ENCODE measurements at regions of chr17 and their contacts with region 1.

Region 1: DNA sequence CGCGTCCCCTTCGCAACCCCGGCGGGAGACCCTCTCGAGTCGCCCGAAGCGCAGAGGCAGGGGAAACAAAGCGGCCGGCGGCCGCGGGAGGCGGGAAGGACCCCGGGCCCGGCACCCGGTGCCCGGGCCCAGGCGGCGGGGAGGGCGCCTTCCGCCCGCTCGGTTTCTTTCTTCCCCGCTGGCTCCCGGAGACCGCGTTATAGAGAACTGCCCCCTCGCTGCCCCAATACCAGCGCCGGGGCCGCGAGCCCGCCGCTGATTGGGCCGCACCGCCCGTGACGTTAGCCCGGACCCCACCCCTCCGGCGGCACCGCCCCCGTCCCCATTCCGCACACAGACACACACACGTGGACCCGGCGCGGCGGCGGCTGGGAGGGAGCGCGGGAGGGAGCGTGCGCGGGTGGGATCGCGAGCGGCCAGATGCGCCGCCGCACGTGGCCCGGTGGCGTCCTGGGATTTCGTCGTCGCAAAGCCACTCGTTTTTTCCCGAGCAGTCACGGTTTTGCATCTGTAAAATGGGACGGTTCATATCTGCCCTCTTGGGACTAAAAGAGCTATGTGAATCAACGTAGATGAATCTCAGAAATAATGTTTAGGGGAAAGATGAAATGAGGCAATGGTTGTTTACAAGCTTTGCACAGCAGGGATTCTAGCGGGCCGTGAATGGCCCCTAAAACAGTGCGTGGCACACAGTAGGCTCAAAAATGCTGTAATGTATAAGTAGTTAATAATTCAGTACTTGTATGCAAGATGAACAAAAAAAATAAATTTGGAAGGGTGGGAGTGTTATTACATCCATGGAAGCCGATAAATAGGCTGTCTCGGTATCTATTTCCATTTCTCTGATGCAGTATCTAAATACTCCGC is at the start of gene EPOP:
- DNase-seq: peak; percentile 97
- H3K4me3 Mint-ChIP-seq: peak within 1 kb of the TSS; percentile 65
- H3K27ac Mint-ChIP-seq: peak within 1 kb of the TSS; percentile 89
- H3K4me1 Mint-ChIP-seq: peaks cover 44% of the 10 kb centered on the region
- H3K27me3 Mint-ChIP-seq: peaks cover 23% of the 10 kb centered on the region
- total RNA-seq, gene EPOP: 52.1 and 54.9 TPM in 2 replicates

Region 2: DNA sequence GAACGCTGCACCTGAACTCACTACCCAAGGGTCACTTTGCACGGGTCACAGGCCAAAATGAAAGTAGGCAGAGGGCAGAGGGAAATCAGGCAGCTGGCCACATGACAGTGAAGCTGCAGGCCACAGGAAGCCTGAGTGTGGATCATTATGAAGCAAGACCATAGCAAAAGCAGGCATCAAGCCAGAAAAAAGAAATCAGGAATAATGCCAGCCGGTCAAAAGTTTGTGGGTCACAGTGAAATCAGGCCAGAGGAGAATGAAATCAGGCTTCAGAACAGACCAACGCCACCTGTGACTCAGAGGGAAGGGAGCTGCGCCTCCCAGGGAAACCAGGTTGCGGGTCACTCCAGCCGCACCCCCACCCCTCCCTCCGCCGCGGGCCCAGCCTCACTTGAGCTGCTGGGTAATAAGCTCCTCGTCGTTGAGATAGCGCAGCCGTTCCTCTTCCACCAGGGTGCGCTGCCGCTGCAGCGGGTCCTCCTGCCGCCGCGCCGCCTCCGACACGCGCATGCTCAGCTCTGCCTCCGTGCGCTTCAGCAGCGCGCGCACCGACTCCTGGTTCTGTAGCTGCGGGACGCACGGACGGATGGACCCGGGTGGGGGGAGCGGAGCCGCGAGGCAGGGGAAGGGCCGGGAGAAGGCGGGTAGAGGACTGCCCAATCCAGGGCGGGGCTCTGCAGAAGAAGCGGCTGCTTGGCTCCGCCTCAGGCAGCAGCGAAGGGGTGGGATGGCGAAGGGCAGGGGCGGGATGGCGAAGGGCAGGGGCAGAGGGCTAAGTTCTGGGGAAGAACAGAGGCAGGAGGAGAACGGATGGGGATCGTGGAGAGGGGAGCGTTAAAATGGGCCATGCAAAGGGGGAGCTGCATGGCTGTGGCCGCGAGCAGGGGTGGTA is 116.9 kb before region 1 on chr17:
- intact Hi-C with region 1: loop called (anchors 2 kb)
- DNase-seq: peak; percentile 97
- H3K4me3 Mint-ChIP-seq: peak overlapping the region; percentile 90
- H3K27ac Mint-ChIP-seq: peak overlapping the region; percentile 29
- H3K4me1 Mint-ChIP-seq: peaks cover 23% of the 10 kb centered on the region
- H3K27me3 Mint-ChIP-seq: peaks cover 52% of the 10 kb centered on the region

Region 3: GRCh38 chr17:38729886-38730525 is 55.0 kb after region 1 on chr17 and contains the start of gene CISD3:
- intact Hi-C with region 1: loop called (anchors 1 kb)
- DNase-seq: peak; percentile 97
- H3K4me3 Mint-ChIP-seq: peak within 1 kb of the TSS; percentile 93
- H3K27ac Mint-ChIP-seq: peak within 1 kb of the TSS; percentile 95
- H3K4me1 Mint-ChIP-seq: peaks cover 72% of the 10 kb centered on the region
- H3K27me3 Mint-ChIP-seq: no peaks in the 10 kb centered on the region
- total RNA-seq, gene CISD3: 44.0 and 46.7 TPM in 2 replicates

Region 4: DNA sequence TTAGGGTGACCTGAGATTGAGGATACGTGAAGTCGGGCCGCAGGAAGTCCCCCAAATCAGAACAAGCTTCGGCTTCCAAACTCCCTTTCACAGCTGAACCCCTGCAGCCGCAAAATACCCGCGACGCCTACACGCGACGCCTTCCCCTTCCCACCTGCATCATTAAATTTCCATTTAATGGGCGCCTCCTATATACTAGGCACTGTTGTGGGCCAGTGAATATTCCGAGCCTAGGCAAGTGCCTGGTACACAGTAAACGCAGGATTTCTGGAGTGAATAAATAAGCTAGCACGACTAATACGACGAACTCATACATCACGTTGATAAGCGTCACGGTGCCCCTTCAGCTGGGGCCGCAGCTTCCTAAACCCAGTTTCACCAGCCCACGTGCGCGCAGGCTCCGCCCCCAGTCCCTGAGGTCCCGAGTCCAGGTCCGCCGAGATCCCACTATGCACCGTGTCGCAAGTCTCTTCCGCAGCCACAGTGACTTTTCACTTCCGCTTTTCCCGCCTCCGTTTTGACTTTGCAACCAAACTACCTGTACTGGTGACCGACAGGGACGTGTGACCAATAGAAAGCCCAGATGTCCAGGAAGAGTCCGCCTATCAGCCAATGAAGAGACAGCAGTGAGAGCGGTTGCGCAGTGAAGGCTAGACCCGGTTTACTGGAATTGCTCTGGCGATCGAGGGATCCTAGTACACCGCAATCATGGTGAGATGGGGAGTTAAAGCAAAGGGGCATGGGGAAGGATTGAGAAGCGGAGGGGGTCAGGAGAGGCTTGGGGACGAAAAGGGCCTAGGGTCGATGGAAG is 77.3 kb after region 1 on chr17 and contains the start of gene PSMB3:
- intact Hi-C with region 1: loop called (anchors 1 kb)
- DNase-seq: peak; percentile 99
- H3K4me3 Mint-ChIP-seq: peak within 1 kb of the TSS; percentile 99
- H3K27ac Mint-ChIP-seq: peak within 1 kb of the TSS; percentile 98
- H3K4me1 Mint-ChIP-seq: peaks cover 39% of the 10 kb centered on the region
- H3K27me3 Mint-ChIP-seq: peaks cover 27% of the 10 kb centered on the region
- total RNA-seq, gene PSMB3: 356 and 358 TPM in 2 replicates

Region 5: DNA sequence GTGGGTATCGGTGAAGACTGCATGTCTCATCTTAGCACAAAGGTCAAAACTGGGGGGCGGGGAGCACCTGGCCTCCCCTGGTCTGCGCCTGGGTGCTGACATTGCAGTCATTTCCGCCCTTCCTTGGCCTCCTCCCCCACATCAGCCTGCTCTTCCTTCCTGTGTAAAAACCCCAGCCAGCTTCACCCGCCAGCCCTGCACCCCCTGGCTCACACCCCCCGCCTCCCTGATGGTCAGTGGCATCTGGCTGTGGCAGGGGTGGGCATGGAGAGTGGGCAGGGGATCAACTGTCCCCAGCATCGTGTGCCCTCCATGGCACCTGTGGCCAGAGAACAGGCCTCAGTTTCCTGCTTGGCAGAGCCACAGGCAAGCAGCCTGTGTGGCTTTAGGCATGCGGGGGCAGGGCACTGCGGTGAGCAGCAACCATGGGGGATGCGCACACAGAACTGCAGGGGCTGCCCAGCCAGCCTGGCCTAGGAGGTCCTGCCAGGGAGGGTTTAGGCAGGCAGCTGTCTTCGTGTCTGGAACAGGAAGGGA is 223.9 kb after region 1 on chr17:
- intact Hi-C with region 1: no loop called
- DNase-seq: peak; percentile 93
- H3K4me3 Mint-ChIP-seq: peak overlapping the region; percentile 75
- H3K27ac Mint-ChIP-seq: peak overlapping the region; percentile 91
- H3K4me1 Mint-ChIP-seq: peaks cover 46% of the 10 kb centered on the region
- H3K27me3 Mint-ChIP-seq: no peaks in the 10 kb centered on the region

Region 6: GRCh38 chr17:39153599-39154051 is 478.6 kb after region 1 on chr17:
- intact Hi-C with region 1: loop called (anchors 1 kb)
- DNase-seq: peak; percentile 98
- H3K4me3 Mint-ChIP-seq: peak overlapping the region; percentile 95
- H3K27ac Mint-ChIP-seq: peak overlapping the region; percentile 94
- H3K4me1 Mint-ChIP-seq: peaks cover 27% of the 10 kb centered on the region
- H3K27me3 Mint-ChIP-seq: peaks cover 41% of the 10 kb centered on the region